Mammary epithelial cell (primary cell): ENCODE measurements at regions of chr20 and their contacts with region 1.

Region 1: DNA sequence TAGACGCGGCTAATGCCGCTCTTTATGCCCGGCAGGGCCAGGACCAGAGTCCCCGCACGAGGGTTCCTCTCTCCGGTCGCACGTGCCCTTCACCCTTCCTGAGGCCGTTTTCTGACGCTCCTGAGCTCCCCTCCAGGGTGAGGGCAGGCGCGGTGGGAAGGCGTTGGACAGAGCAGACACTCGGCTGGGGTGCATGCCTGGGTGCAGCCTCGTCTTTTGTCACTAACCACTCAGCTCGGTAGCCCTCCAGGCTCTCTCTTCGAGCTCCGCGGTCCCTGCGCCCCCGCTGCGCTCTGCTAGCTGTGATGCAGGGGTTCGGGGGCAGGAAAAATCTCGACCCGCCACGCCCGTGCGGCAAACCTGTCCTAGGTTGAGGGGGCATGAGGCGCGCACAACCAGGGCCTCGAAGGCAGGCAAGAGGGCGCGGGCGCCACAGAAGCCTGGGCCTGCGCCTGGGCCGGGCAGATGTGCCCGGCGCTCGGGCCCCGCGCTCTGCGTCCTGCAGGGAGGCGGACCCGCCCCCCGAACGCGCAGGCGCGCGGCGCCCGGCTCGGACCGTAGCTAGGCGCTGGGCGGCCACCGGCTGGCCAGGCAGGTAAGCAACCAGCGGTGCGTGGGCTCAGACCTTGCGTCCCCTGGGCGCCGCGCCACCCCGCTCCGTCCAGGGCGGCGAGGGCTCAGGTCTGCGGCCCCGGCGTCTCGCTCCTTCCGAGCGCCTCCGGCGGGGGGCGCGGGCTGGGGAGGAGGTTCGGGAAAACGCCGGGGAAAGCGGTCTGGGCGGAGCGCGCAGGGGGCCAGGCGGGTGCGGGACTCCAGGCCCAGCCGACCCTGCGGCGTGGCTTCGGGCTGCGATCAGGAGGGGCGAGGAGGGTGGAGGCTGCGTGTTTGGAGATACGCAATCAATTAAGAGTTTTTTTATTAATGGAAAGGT is at the start of gene L3MBTL1:
- DNase-seq: peak; percentile 64
- H3K4me3 ChIP-seq: peak within 1 kb of the TSS; percentile 68 to 95 (median 90)
- H3K27ac ChIP-seq: peak within 1 kb of the TSS; percentile 42
- H3K4me1 ChIP-seq: peaks cover 12% of the 10 kb centered on the region
- H3K27me3 ChIP-seq: no peaks in the 10 kb centered on the region
- CTCF ChIP-seq: no peak
- total RNA-seq, gene L3MBTL1: 10.4 to 14.5 TPM

Region 2: GRCh38 chr20:43463864-43464785 is 43.3 kb before region 1 on chr20:
- CTCF ChIA-PET with region 1: no interaction called
- dilution Hi-C with region 1: no loop called
- in situ Hi-C with region 1: no loop called
- intact Hi-C with region 1: loop called (anchors 5 kb)
- DNase-seq: no peak
- H3K4me3 ChIP-seq: no peak overlapping the region
- H3K27ac ChIP-seq: no peak overlapping the region
- H3K4me1 ChIP-seq: peaks cover 6% of the 10 kb centered on the region
- H3K27me3 ChIP-seq: no peaks in the 10 kb centered on the region
- CTCF ChIP-seq: no peak